CD8-positive, alpha-beta memory T cell (primary cell): ENCODE measurements at regions of chr20 and their contacts with region 1.

Region 1: DNA sequence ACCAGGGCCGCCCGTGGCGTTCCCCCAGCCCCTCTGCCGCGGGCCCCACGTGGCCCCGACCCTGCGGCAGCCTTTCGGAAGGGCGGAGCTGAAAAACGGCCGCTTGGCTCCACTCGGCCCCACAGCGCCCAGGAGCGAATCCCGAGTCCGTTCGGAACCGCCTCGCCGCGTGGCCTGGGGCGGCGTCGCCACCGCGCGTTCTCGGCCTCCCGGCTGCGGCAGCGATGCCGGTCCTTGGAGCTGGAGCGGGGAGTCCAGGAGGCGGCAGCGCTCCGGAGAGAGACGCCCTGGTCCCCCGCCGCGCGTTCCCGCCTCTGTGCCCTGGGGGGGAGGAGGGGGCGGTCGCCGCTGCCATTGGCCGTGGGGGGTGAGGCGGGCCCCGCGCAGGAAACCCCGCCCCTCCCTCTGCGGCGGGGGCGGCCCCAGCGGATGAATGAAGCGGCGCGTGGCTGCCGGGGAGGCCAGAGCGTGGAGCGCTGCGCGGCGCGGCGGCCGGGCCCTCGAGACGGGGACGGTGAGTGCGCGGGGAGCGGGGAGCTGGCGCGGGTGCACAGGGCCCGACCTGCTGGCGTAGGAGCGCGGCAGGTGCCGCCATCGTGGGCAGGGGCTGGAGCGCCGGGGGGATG is at the start of gene SLCO4A1:
- DNase-seq: peak; percentile 74 to 85 (median 79)
- H3K4me3 ChIP-seq: peak within 1 kb of the TSS; percentile 61
- H3K4me3 Mint-ChIP-seq: peak within 1 kb of the TSS; percentile 70 to 90 (median 73)
- H3K27ac ChIP-seq: peak within 1 kb of the TSS; percentile 9
- H3K27ac Mint-ChIP-seq: peak within 1 kb of the TSS in 2 of 8 donors; percentile 55 to 94
- H3K4me1 ChIP-seq: peaks cover 17% of the 10 kb centered on the region
- H3K4me1 Mint-ChIP-seq: peaks cover 4 to 18% (median 8%) of the 10 kb centered on the region in 3 donors
- H3K27me3 ChIP-seq: no peaks in the 10 kb centered on the region
- H3K27me3 Mint-ChIP-seq: no peaks in the 10 kb centered on the region
- total RNA-seq, gene SLCO4A1: 42.0 to 44.9 TPM

Region 2: GRCh38 chr20:62423326-62423986 is 218.7 kb before region 1 on chr20:
- CTCF ChIA-PET with region 1: no interaction called
- POLR2A ChIA-PET with region 1: no interaction called
- DNase-seq: no peak
- H3K4me3 ChIP-seq: no peak overlapping the region
- H3K4me3 Mint-ChIP-seq: no peak overlapping the region
- H3K27ac ChIP-seq: no peak overlapping the region
- H3K27ac Mint-ChIP-seq: no peak overlapping the region
- H3K4me1 ChIP-seq: no peaks in the 10 kb centered on the region
- H3K4me1 Mint-ChIP-seq: peaks cover 0 to 2% (median 0%) of the 10 kb centered on the region in 3 donors
- H3K27me3 ChIP-seq: no peaks in the 10 kb centered on the region
- H3K27me3 Mint-ChIP-seq: no peaks in the 10 kb centered on the region

Region 3: GRCh38 chr20:62493253-62493883 is 148.8 kb before region 1 on chr20:
- CTCF ChIA-PET with region 1: no interaction called
- POLR2A ChIA-PET with region 1: no interaction called
- DNase-seq: no peak
- H3K4me3 ChIP-seq: no peak overlapping the region
- H3K4me3 Mint-ChIP-seq: no peak overlapping the region
- H3K27ac ChIP-seq: no peak overlapping the region
- H3K27ac Mint-ChIP-seq: no peak overlapping the region
- H3K4me1 ChIP-seq: no peaks in the 10 kb centered on the region
- H3K4me1 Mint-ChIP-seq: no peaks in the 10 kb centered on the region
- H3K27me3 ChIP-seq: no peaks in the 10 kb centered on the region
- H3K27me3 Mint-ChIP-seq: peaks cover 13 to 25% of the 10 kb centered on the region in 2 donors

Region 4: GRCh38 chr20:62652051-62652926 is 10.1 kb after region 1 on chr20:
- CTCF ChIA-PET with region 1: no interaction called
- POLR2A ChIA-PET with region 1: interaction called, 15 read pairs
- DNase-seq: peak; percentile 34 to 83 (median 73)
- H3K4me3 ChIP-seq: peak overlapping the region; percentile 47
- H3K4me3 Mint-ChIP-seq: peak overlapping the region; percentile 72 to 90 (median 82)
- H3K27ac ChIP-seq: peak overlapping the region; percentile 82
- H3K27ac Mint-ChIP-seq: peak overlapping the region; percentile 90 to 99 (median 96)
- H3K4me1 ChIP-seq: peaks cover 29% of the 10 kb centered on the region
- H3K4me1 Mint-ChIP-seq: peaks cover 20 to 32% (median 30%) of the 10 kb centered on the region in 3 donors
- H3K27me3 ChIP-seq: no peaks in the 10 kb centered on the region
- H3K27me3 Mint-ChIP-seq: peaks cover 0 to 2% of the 10 kb centered on the region in 2 donors